Activated CD4-positive, alpha-beta memory T cell treated with anti-CD3 and anti-CD28 coated beads, Interleukin-2, amount 10 ng/mL, durations not matched to agents 7 days and 5 days (primary cell): ENCODE measurements at regions of chr7 and their contacts with region 1.

Region 1: DNA sequence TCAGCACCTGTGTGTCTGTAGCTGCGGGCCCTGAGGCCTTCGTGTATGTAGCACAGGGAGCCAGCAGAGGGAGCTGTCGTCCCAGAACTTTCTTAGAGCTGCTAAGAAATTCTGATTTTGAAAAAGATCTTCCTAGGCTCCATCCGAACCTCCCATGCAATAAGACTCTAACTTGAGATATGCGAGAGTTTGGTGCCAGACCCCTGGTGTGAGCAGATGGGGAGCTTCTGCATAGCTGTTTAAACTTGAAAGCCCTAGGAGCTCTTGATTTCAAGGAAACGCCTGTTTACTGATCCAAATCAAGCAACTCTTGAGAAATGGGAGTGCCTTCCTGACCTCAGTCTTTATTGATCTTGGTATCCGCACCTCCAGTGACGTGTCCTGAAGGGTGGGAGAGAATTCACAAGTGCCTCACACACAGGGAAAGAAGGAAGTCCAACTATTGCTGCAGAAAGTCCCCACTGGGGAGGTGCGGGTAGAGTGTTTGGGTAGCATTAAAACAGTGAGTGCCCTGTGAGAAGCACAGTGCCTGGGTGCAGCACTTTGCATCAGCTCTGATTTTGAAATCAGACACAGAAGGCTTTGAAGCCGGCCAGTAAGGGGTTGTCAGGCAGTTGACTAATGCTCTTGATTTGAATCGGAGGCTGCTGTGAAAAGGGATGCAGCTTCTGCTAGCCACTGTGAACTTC is 66.4 kb upstream of the STRIP2 start:
- DNase-seq: peak; percentile 87
- H3K4me3 Mint-ChIP-seq: peak overlapping the region; percentile 72
- H3K27ac Mint-ChIP-seq: peak overlapping the region; percentile 92
- H3K4me1 Mint-ChIP-seq: peaks cover 50% of the 10 kb centered on the region
- H3K27me3 Mint-ChIP-seq: no peaks in the 10 kb centered on the region

Region 2: DNA sequence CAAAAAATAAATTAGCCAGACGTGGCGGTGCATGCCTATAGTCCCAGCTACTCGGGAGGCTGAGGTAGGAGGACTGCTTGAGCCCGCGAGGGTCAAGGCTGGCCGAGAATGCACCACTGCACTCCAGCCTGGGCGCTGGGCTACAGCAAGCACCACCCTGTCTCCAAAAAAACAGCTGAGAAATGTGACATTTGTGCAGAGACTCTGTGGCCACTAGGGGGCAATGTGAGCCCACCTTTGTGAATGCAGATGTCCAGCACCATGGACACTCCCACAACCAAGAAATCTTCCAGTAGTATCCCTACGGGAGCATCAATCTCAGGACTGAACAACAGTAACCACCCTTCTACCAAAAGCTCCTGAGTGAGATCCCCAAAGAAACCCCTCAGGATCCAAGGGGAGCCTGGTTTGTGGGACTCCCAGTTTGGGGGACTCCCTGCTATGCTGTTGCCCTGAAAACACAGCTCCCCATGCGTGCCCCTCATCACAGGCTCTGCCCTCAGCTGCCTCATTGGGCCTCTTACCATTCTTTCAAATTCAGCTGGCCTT is 149.3 kb before region 1 on chr7:
- CTCF ChIA-PET with region 1: interaction called, 28 read pairs
- POLR2A ChIA-PET with region 1: interaction called, 3 read pairs
- DNase-seq: peak; percentile 82
- H3K4me3 Mint-ChIP-seq: no peak overlapping the region
- H3K27ac Mint-ChIP-seq: no peak overlapping the region
- H3K4me1 Mint-ChIP-seq: peaks cover 13% of the 10 kb centered on the region
- H3K27me3 Mint-ChIP-seq: peaks cover 6% of the 10 kb centered on the region

Region 3: DNA sequence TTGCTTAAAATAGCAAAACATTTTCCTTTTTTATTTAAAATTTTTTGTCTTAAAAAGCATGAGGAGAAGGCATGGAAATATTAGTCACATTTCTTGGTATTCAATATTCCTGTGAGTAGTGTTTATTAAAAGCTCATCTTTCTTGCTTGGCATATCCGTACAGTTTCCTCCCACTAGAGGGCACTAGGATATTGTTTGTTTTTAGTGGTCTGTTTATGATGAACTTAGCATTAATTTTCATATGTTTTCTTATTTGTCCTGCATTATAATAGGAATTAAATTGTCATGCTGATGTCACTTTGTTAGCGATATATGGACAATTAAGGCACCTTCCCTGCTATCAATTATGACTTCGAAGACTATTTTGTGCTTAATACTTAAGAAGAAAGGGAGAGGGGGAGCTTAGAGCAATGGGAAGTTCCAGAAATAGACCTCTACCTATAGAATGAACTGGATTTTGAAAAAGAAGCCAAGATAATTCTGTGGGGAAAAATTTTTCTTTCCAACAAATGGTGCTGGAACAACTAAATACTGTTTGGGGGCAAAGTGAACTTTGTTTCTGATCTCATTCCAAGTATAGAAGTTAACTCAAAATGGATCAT is 24.6 kb before region 1 on chr7:
- CTCF ChIA-PET with region 1: interaction called, 23 read pairs
- POLR2A ChIA-PET with region 1: interaction called, 7 read pairs
- DNase-seq: no peak
- H3K4me3 Mint-ChIP-seq: no peak overlapping the region
- H3K27ac Mint-ChIP-seq: no peak overlapping the region
- H3K4me1 Mint-ChIP-seq: peaks cover 41% of the 10 kb centered on the region
- H3K27me3 Mint-ChIP-seq: peaks cover 4% of the 10 kb centered on the region

Region 4: GRCh38 chr7:129433847-129434674 is 66.2 kb after region 1 on chr7 and contains the start of gene STRIP2:
- CTCF ChIA-PET with region 1: interaction called, 30 read pairs
- POLR2A ChIA-PET with region 1: interaction called, 30 read pairs
- DNase-seq: peak; percentile 94
- H3K4me3 Mint-ChIP-seq: peak within 1 kb of the TSS; percentile 85
- H3K27ac Mint-ChIP-seq: peak within 1 kb of the TSS; percentile 71
- H3K4me1 Mint-ChIP-seq: peaks cover 38% of the 10 kb centered on the region
- H3K27me3 Mint-ChIP-seq: peaks cover 6% of the 10 kb centered on the region
- total RNA-seq, gene STRIP2: 28.3 to 29.7 TPM

Region 5: GRCh38 chr7:129502376-129502776 is 134.5 kb after region 1 on chr7 and contains the start of gene SMKR1:
- CTCF ChIA-PET with region 1: interaction called, 11 read pairs
- POLR2A ChIA-PET with region 1: interaction called, 3 read pairs
- DNase-seq: peak; percentile 94
- H3K4me3 Mint-ChIP-seq: peak within 1 kb of the TSS; percentile 75
- H3K27ac Mint-ChIP-seq: peak within 1 kb of the TSS; percentile 58
- H3K4me1 Mint-ChIP-seq: peaks cover 34% of the 10 kb centered on the region
- H3K27me3 Mint-ChIP-seq: no peaks in the 10 kb centered on the region
- total RNA-seq, gene SMKR1: 1.6 to 2.2 TPM

Region 6: DNA sequence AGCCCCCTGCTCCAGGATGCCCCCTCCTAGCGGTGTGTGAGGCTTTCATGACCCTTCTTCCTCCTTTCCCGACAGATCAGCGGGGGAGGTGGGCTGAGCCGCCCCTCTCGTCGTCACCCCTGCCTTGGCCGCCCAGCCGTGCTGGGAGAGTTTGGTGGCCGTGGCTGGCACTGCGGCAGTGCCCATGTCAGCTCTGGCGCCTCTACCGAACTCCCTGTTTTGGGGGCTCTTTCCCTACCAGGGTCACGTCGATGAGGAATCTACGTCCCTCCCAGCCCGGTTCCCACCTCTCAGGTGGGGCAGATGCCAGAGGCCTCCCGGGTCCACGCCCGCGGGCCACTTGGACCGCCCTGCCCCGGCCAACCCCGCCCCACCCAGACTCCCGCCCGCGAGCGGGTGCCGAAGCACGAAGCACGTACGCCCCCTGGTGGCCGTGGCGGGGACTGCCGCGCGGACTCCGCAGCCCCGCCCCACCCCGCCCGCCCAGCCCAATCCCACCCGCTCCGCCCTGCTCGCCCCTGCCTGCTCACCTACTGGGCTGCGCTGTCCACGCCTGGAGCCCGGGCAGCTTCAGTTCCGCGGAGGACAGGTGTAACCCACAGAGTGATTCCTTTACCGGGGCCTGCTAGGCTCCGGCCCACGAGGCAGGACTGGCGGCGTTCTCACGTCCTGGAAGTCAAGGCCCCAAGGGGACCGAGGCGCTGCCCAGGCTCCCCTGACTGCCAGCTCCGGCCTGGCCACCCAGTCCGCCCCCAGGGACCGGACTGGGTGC is 457.8 kb after region 1 on chr7:
- CTCF ChIA-PET with region 1: interaction called, 30 read pairs
- POLR2A ChIA-PET with region 1: no interaction called
- DNase-seq: peak; percentile 90
- H3K4me3 Mint-ChIP-seq: peak overlapping the region; percentile 90
- H3K27ac Mint-ChIP-seq: peak overlapping the region; percentile 71
- H3K4me1 Mint-ChIP-seq: peaks cover 24% of the 10 kb centered on the region
- H3K27me3 Mint-ChIP-seq: peaks cover 3% of the 10 kb centered on the region

Region 7: DNA sequence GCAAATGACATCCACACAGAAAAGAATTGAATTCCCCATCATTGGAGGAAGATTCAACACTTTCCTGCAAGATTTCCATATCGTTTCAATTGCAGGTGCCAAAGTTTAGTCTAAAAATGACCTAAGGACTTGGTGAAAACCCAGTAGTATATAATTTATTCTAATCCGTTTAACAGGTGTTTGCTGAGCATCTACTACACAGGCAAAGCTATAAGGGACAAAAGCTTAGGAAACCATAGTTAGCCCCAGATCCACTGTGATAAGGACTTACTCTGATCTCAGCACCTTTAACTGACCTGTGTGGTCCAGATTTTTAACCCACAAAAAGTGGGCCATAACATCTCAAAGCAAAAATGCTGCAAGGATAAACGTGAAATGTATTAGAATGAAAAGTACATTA is 565.8 kb after region 1 on chr7:
- CTCF ChIA-PET with region 1: no interaction called
- POLR2A ChIA-PET with region 1: no interaction called
- DNase-seq: no peak
- H3K4me3 Mint-ChIP-seq: no peak overlapping the region
- H3K27ac Mint-ChIP-seq: no peak overlapping the region
- H3K4me1 Mint-ChIP-seq: no peaks in the 10 kb centered on the region
- H3K27me3 Mint-ChIP-seq: no peaks in the 10 kb centered on the region